PC-3 (cell line): ENCODE measurements at regions of chr7 and their contacts with region 1.

Region 1: GRCh38 chr7:134316539-134317344 is at the start of gene SLC35B4:
- DNase-seq: peak; percentile 96
- ATAC-seq: peak; percentile 98
- H3K4me3 ChIP-seq: peak within 1 kb of the TSS; percentile 85
- H3K27ac ChIP-seq: peak within 1 kb of the TSS; percentile 35; the same call in 1 of the 2 replicates
- H3K4me1 ChIP-seq: peaks cover 13% of the 10 kb centered on the region
- H3K27me3 ChIP-seq: no peaks in the 10 kb centered on the region
- CTCF ChIP-seq: no peak
- total RNA-seq, gene SLC35B4: 34.2 and 45.0 TPM in 2 replicates

Region 2: GRCh38 chr7:133183063-133183778 is 1133.5 kb before region 1 on chr7:
- CTCF ChIA-PET with region 1: no interaction called
- POLR2A ChIA-PET with region 1: interaction called, 15 read pairs
- intact Hi-C with region 1: no loop called
- DNase-seq: no peak
- ATAC-seq: no peak
- H3K4me3 ChIP-seq: no peak overlapping the region
- H3K27ac ChIP-seq: no peak overlapping the region
- H3K4me1 ChIP-seq: peaks cover 8% of the 10 kb centered on the region; the same call in 1 of the 2 replicates
- H3K27me3 ChIP-seq: peaks cover 37% of the 10 kb centered on the region
- CTCF ChIP-seq: no peak

Region 3: DNA sequence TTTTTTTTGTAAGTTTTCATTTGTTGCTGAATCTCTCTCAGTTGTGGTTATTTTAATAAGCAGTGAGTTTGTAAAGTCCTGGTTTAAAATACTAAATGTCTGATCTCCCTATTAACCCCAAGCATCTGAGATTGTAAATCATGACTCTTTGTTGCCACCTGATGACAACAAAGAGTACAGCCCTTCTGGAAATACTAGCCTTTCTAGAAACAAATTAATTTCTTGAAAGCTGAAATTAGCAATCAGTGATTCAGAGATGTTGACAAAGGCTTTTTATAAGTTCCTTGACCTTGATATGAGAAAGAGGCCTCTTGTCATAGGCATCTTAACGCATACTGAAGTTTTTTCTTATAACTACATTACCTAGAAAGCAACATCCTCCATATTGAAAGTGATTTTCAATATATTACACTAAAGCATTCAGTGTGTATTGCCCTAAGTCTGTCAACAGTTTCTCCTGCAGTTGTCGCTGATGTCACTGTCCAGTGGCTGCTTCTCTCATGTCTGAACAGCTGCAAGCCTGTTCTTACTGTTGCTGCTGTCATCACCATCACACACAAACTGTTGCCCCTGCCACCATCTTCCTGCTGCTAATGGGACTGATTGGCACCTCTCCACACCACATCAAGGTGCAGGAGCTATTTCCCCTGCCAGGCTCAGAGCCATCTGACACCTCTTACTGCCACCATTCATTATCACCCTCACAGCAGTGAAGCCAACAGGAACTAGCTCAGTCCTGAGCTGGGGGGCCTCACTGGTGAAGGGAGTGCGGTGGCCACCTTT is 284.7 kb before region 1 on chr7:
- CTCF ChIA-PET with region 1: no interaction called
- POLR2A ChIA-PET with region 1: interaction called, 5 read pairs
- intact Hi-C with region 1: loop called (anchors 5 kb)
- DNase-seq: peak; percentile 26
- ATAC-seq: no peak; the same call in 1 of the 2 replicates
- H3K4me3 ChIP-seq: no peak overlapping the region
- H3K27ac ChIP-seq: no peak overlapping the region
- H3K4me1 ChIP-seq: peaks cover 17% of the 10 kb centered on the region
- H3K27me3 ChIP-seq: no peaks in the 10 kb centered on the region
- CTCF ChIP-seq: peak; percentile 58

Region 4: GRCh38 chr7:134126966-134127848 is 189.5 kb before region 1 on chr7 and contains the start of gene LRGUK:
- CTCF ChIA-PET with region 1: no interaction called
- POLR2A ChIA-PET with region 1: interaction called, 4 read pairs
- intact Hi-C with region 1: loop called (anchors 2 kb)
- DNase-seq: peak; percentile 68
- ATAC-seq: peak; percentile 100
- H3K4me3 ChIP-seq: peak within 1 kb of the TSS; percentile 75
- H3K27ac ChIP-seq: no peak within 1 kb of the TSS
- H3K4me1 ChIP-seq: no peaks in the 10 kb centered on the region
- H3K27me3 ChIP-seq: peaks cover 10% of the 10 kb centered on the region; the same call in 1 of the 2 replicates
- CTCF ChIP-seq: no peak
- total RNA-seq, gene LRGUK: 1.0 TPM in 2 replicates

Region 5: GRCh38 chr7:134368851-134369552 is 52.3 kb after region 1 on chr7:
- CTCF ChIA-PET with region 1: interaction called, 3 read pairs
- POLR2A ChIA-PET with region 1: no interaction called
- intact Hi-C with region 1: loop called (anchors 1 kb)
- DNase-seq: peak; percentile 95
- ATAC-seq: peak; percentile 68
- H3K4me3 ChIP-seq: peak overlapping the region; percentile 37; the same call in 1 of the 2 replicates
- H3K27ac ChIP-seq: peak overlapping the region; percentile 96
- H3K4me1 ChIP-seq: peaks cover 55% of the 10 kb centered on the region
- H3K27me3 ChIP-seq: no peaks in the 10 kb centered on the region
- CTCF ChIP-seq: no peak

Region 6: DNA sequence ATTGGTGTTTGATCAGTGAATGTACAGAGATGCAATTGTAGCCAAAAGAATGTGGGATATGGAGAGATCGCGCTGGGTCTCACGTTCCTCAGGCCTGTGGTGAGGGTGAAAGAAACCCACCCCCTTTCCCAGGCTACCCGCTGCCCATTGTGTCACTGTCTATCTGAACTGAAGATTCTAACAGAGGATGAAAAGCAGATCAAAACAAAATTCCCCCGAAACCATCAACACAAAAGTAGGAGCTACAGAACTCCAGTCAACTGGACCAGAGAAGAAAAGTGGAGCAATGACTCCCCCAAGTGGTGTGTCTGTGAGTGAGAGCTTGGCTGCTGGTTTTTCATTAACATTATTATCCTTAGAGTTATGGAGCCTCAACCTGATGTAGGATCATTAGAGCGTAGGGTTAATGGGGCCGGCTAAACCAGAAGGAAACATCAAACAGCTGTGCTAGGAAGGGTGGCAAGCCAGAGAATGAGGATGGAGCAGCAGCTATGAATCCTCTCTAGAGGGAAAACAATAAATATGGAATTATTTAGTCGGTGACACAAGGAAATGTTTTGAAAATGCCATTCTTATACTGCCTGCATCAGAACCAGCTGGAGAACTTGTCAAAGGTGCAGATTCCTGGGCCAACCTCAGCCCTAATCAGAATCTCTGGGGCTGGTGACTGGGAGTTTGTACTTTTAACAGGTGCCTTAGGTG is 103.8 kb after region 1 on chr7:
- CTCF ChIA-PET with region 1: no interaction called
- POLR2A ChIA-PET with region 1: no interaction called
- intact Hi-C with region 1: loop called (anchors 1 kb)
- DNase-seq: peak; percentile 79
- ATAC-seq: peak; percentile 84
- H3K4me3 ChIP-seq: no peak overlapping the region
- H3K27ac ChIP-seq: peak overlapping the region; percentile 18; the same call in 1 of the 2 replicates
- H3K4me1 ChIP-seq: peaks cover 32% of the 10 kb centered on the region
- H3K27me3 ChIP-seq: no peaks in the 10 kb centered on the region
- CTCF ChIP-seq: peak; percentile 90

Region 7: DNA sequence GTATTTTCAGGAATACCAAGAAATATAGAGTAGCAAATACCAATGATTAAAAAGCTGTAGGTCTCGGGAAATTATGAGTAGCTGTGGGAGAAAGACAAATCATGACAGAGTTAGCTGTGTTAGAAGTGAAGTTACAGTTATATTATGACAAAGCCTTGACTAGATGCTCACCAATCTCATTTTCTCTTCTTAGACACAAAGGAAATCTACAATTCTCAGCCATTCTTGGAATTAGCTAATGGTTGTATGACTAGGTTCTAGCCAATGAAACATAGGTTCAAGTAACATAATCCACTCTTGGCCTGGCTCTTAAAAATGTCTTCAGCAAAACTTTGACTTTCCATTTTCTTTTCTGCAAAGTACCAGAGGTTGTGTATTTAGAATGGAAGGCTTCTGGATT is 1889.2 kb after region 1 on chr7:
- CTCF ChIA-PET with region 1: no interaction called
- POLR2A ChIA-PET with region 1: no interaction called
- intact Hi-C with region 1: no loop called
- DNase-seq: no peak
- ATAC-seq: no peak
- H3K4me3 ChIP-seq: no peak overlapping the region
- H3K27ac ChIP-seq: no peak overlapping the region
- H3K4me1 ChIP-seq: no peaks in the 10 kb centered on the region
- H3K27me3 ChIP-seq: no peaks in the 10 kb centered on the region
- CTCF ChIP-seq: no peak